ENCODE measurements at regions of chr1 and their contacts with region 1.

Region 1: GRCh38 chr1:38990738-38991639 is at the start of gene AKIRIN1:
- DNase-seq: peak; percentile 97 to 100 (median 99)
- H3K4me3 ChIP-seq: peak within 1 kb of the TSS; percentile 71 to 100 (median 91)
- H3K27ac ChIP-seq: peak within 1 kb of the TSS; percentile 63 to 99 (median 94)
- H3K27me3 ChIP-seq: no peaks in the 10 kb centered on the region
- CTCF ChIP-seq: peak in 44 of 56 donors; percentile 9 to 66 (median 30)
- total RNA-seq, gene AKIRIN1: 53.3 to 106 (median 71.4) TPM

Region 2: DNA sequence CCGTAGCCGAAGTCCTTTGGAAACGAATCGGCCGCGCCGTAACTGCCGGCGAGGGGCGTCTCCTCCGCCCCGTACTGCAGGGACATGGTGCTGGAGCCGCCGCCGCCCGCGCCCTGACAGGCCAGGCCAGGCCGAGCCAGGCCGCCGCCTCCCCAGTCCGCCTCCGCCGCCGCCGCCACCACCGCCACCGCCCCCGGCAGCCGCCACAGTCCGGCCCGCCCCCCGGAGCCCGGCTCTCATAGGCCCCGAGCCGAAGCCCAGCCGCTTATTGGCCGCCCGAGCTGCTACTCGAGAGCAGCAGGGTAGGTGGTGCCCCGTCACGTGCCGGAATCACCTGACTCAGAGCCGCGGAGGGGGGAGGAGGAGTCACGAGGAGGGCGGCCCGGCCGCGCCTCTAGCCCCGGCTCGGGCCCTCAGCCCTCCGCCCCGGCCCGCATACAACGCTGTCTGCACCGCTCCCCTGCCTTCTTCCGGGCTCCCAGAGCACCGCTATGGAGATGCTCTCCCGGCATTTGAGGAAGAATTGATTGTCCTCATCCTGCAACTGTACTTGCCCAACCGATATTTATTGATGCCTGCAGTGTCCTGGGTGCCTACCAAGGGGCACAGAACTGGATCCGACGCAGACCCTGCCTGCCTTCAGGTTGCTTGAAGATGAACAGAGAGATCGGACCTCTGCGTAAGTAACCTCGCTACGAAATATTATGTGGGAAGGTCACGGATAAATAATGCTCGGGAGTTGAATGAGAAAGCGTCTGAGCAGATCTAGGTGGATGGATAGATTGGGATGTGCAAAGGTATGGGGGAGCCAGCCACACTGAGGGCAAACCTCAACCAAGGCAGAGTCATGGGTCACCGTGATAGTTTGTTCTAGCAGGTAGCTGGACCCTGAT is 131.2 kb before region 1 on chr1 and contains the start of gene RRAGC:
- intact Hi-C with region 1: loop called in 1 of 2 experiments (anchors 10 kb)
- DNase-seq: peak; percentile 99 to 100 (median 100)
- H3K4me3 ChIP-seq: peak within 1 kb of the TSS; percentile 70 to 100 (median 95)
- H3K27ac ChIP-seq: peak within 1 kb of the TSS; percentile 66 to 97 (median 89)
- H3K27me3 ChIP-seq: no peaks in the 10 kb centered on the region
- CTCF ChIP-seq: peak in 9 of 56 donors; percentile 2 to 31 (median 10)
- total RNA-seq, gene RRAGC: 18.0 to 36.1 (median 25.7) TPM

Region 3: GRCh38 chr1:38873027-38873969 is 117.7 kb before region 1 on chr1 and contains the start of gene MYCBP:
- intact Hi-C with region 1: loop called in 1 of 2 experiments (anchors 5 kb)
- DNase-seq: peak; percentile 89 to 99 (median 96)
- H3K4me3 ChIP-seq: peak within 1 kb of the TSS; percentile 56 to 99 (median 81)
- H3K27ac ChIP-seq: peak within 1 kb of the TSS in 44 of 59 donors; percentile 30 to 88 (median 68)
- H3K27me3 ChIP-seq: no peaks in the 10 kb centered on the region
- CTCF ChIP-seq: peak in 48 of 56 donors; percentile 7 to 66 (median 32)
- total RNA-seq, gene MYCBP: 0.83 to 11.2 (median 2.3) TPM

Region 4: DNA sequence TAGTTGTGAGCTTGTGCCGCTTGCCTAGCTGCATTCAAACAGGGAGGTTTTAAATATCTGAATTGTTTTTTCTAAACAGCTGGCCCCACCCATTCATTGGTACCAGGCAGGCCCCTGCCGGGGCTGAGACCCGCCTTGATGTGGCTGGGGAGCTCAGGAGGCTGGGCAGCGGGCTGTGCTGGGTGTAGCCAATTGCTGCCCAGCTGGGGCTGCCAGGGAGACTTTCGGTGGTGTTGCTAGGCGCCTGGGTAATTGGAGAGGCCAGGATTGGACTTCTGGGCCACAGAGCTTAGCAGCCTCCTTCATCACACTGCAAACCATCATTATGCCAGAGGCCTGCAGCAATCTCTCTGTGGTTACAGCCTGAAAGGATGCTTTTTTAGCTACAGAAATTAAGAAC is 61.5 kb before region 1 on chr1:
- intact Hi-C with region 1: loop called (anchors 5 kb)
- DNase-seq: peak; percentile 18 to 91 (median 86)
- H3K4me3 ChIP-seq: peak overlapping the region in 54 of 59 donors; percentile 1 to 67 (median 44)
- H3K27ac ChIP-seq: peak overlapping the region; percentile 85 to 99 (median 96)
- H3K27me3 ChIP-seq: no peaks in the 10 kb centered on the region
- CTCF ChIP-seq: peak in 8 of 56 donors; percentile 10 to 37 (median 12)

Region 5: GRCh38 chr1:39026051-39026865 is 35.3 kb after region 1 on chr1 and contains the start of gene NDUFS5:
- intact Hi-C with region 1: loop called (anchors 5 kb)
- DNase-seq: peak; percentile 72 to 95 (median 91)
- H3K4me3 ChIP-seq: peak within 1 kb of the TSS; percentile 47 to 97 (median 82)
- H3K27ac ChIP-seq: peak within 1 kb of the TSS; percentile 69 to 98 (median 92)
- H3K27me3 ChIP-seq: no peaks in the 10 kb centered on the region
- CTCF ChIP-seq: peak in 12 of 56 donors; percentile 2 to 23 (median 10)
- total RNA-seq, gene NDUFS5: 129 to 361 (median 263) TPM

Measured in dorsolateral prefrontal cortex (tissue), 120 donors.